Esophagus muscularis mucosa (tissue), 4 donors: ENCODE measurements at regions of chr7 and their contacts with region 1.

Region 1: GRCh38 chr7:120185940-120186682 is 86.9 kb upstream of the KCND2 start:
- DNase-seq: no peak
- H3K4me3 ChIP-seq: no peak overlapping the region
- H3K27ac ChIP-seq: no peak overlapping the region
- H3K4me1 ChIP-seq: peaks cover 0 to 16% (median 5%) of the 10 kb centered on the region in 4 donors
- H3K27me3 ChIP-seq: no peaks in the 10 kb centered on the region
- CTCF ChIP-seq: no peak
- EP300 ChIP-seq: no peak
- POLR2A ChIP-seq: no peak

Region 2: GRCh38 chr7:120110169-120110568 is 75.9 kb before region 1 on chr7:
- intact Hi-C with region 1: no loop called
- DNase-seq: no peak
- H3K4me3 ChIP-seq: no peak overlapping the region
- H3K27ac ChIP-seq: no peak overlapping the region
- H3K4me1 ChIP-seq: no peaks in the 10 kb centered on the region
- H3K27me3 ChIP-seq: no peaks in the 10 kb centered on the region
- CTCF ChIP-seq: no peak
- EP300 ChIP-seq: no peak
- POLR2A ChIP-seq: no peak

Region 3: DNA sequence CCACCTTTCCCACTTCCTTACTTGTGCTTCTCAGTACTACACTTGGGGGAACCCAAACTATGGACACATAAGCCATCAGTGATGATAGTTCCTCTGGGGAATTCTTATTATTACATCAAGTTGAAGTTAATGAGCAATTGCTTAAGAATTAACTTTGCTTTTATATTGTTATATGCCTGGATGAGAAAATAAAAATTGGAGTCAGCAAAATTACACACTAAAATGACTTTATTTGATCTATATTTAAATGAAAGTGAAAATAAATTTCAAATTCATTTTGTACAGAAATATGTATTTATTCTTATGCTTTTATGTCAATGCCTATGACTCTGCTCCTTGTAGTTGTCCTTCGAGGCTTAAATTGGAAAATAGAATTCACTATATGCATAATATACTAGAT is 62.6 kb before region 1 on chr7:
- intact Hi-C with region 1: loop called (anchors 10 kb)
- DNase-seq: no peak
- H3K4me3 ChIP-seq: no peak overlapping the region
- H3K27ac ChIP-seq: no peak overlapping the region
- H3K4me1 ChIP-seq: no peaks in the 10 kb centered on the region
- H3K27me3 ChIP-seq: no peaks in the 10 kb centered on the region
- CTCF ChIP-seq: no peak
- EP300 ChIP-seq: no peak
- POLR2A ChIP-seq: no peak